ENCODE measurements at regions of chr9 and their contacts with region 1.

Region 1: GRCh38 chr9:128159784-128160602 is at the start of gene BBLN:
- DNase-seq: peak; percentile 91
- H3K4me3 ChIP-seq: peak within 1 kb of the TSS; percentile 78 to 86 (median 80)
- H3K27ac ChIP-seq: peak within 1 kb of the TSS; percentile 35
- H3K4me1 ChIP-seq: peaks cover 11% of the 10 kb centered on the region
- H3K27me3 ChIP-seq: no peaks in the 10 kb centered on the region
- CTCF ChIP-seq: no peak
- POLR2A ChIP-seq: peak; percentile 91
- total RNA-seq, gene BBLN: 51.0 and 53.2 TPM in 2 replicates

Region 2: DNA sequence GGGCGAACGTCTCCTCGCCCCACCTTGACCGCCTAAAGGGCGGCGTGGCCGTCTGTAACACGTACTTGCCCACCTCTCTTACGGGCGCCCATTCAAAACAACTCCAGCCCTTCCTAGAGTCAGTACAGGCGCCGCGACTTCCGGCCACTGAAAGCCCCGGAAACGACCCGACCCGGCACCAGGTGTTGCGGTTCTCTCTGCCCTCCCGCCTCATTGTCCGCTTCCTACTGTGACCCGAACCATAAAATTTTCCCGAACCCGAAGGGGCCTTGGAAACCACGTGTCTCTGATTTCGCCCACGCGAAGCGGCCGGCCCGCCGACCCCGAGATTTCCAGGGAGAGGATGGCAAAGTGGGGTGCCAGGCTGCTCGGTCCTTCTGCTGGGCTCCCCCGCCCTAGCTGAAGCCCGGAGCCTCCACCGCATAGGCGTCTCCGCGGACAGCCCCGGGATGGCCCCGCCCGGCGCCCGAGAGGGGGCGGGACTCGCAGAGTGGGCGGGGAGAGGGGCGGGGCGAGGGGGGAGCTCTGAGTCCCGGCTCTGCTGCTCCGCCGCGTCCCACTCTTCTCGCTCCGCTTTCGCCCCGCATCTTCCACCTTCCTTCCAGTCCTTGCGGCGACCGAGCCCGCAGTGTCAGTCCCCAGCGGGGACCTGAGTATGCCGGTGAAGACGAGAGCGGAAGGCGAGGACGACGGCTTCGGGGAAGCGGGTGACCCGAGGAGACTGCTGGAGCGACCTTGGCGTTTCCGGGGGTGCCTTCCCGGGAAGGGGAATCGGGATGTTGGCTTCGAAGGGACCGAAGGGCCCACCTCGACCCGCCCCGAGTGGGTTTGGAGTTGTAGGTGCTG is 31.8 kb before region 1 on chr9:
- CTCF ChIA-PET with region 1: interaction called, 7 read pairs
- POLR2A ChIA-PET with region 1: interaction called, 4 read pairs
- dilution Hi-C with region 1: no loop called
- intact Hi-C with region 1: loop called (anchors 1 kb)
- DNase-seq: peak; percentile 84
- H3K4me3 ChIP-seq: peak overlapping the region; percentile 83 to 92 (median 90)
- H3K27ac ChIP-seq: peak overlapping the region; percentile 76
- H3K4me1 ChIP-seq: peaks cover 11% of the 10 kb centered on the region
- H3K27me3 ChIP-seq: peaks cover 8 to 9% of the 10 kb centered on the region in 2 experiments
- CTCF ChIP-seq: no peak
- POLR2A ChIP-seq: peak; percentile 32

Region 3: GRCh38 chr9:128191406-128192046 is 31.5 kb after region 1 on chr9 and contains the start of gene CIZ1:
- CTCF ChIA-PET with region 1: interaction called, 4 read pairs
- POLR2A ChIA-PET with region 1: no interaction called
- dilution Hi-C with region 1: no loop called
- intact Hi-C with region 1: loop called (anchors 2 kb)
- DNase-seq: peak; percentile 76
- H3K4me3 ChIP-seq: peak within 1 kb of the TSS; percentile 70 to 89 (median 76)
- H3K27ac ChIP-seq: peak within 1 kb of the TSS; percentile 37
- H3K4me1 ChIP-seq: peaks cover 11% of the 10 kb centered on the region
- H3K27me3 ChIP-seq: no peaks in the 10 kb centered on the region
- CTCF ChIP-seq: peak; percentile 74 to 86
- POLR2A ChIP-seq: peak; percentile 49
- total RNA-seq, gene CIZ1: 143 and 150 TPM in 2 replicates

Region 4: DNA sequence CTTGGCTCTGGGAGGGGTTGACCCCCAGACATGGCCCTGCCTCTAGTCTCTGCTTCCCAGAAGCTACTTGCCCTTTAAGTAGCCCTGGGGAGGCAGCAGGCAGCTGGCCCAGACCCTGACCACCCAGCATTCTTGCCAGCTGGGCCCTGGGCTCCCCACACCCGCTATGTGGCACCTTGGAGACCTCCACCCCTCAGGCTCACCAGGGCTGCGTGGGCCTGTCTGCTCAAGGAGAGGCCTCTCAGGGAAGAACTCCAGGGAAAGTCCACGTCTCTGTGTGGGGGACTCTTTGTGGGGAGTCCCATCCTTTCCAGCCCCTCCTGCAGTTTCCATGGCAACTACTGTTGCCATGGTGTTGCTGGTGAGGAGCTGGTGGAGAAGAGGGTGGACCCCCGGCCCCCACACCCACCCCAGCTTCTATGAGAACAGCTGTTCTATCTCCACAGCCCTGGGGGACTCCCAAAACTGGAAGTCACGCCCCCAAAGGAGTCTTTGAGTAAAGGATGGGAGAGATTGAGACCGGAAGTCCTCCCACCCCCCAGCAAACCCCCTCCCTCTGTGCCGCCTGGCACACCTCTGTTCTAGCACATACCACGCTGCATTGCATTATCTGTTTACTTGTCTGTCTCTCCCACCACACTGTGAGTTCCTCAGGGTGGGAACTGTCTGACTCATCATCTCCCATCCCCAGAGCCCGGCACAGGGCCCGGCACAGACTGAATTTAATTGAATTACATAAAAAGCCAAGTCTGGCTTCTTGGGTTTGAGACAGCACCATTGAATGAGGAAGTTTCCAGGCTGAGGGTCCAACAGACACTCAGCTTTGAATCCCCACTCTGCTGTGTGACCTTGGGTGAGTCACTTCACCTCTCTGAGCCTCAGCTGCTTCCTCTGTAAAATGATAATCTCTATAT is 55.8 kb after region 1 on chr9:
- CTCF ChIA-PET with region 1: no interaction called
- POLR2A ChIA-PET with region 1: no interaction called
- dilution Hi-C with region 1: no loop called
- intact Hi-C with region 1: no loop called
- DNase-seq: peak; percentile 12
- H3K4me3 ChIP-seq: no peak overlapping the region
- H3K27ac ChIP-seq: no peak overlapping the region
- H3K4me1 ChIP-seq: peaks cover 3% of the 10 kb centered on the region
- H3K27me3 ChIP-seq: peaks cover 11% of the 10 kb centered on the region in 2 experiments
- CTCF ChIP-seq: no peak
- POLR2A ChIP-seq: no peak

Region 5: DNA sequence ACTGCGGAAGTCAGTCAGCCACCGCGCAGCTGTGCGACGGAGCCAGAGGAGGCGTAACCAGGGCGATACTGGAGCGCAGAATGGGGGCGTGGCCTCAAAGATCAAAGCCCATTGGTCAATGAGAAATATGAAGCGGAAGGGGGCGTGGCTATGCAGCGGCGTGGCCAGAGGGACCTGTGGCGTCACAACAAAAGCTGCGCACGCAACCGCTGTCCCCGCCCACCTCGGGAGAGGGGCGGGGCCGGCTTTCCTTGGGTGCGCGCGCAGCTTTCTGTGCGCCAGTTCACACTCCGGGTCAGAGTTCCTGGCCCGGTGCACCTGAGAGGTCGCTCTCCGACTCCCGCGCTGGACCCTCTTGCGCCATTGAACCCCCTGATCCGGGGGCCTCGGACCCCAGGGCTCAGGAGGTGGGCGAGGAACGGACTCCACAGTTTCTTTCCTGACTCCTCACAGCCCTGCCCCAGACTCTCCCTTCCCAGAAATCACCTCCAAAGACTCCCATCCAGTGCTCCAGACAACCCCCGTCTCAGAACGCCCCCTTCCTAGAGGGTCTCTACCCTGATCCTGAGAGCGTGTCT is 116.1 kb after region 1 on chr9 and contains the starts of genes GOLGA2 and SWI5:
- CTCF ChIA-PET with region 1: no interaction called
- POLR2A ChIA-PET with region 1: no interaction called
- dilution Hi-C with region 1: no loop called
- intact Hi-C with region 1: loop called (anchors 1 kb)
- DNase-seq: peak; percentile 100
- H3K4me3 ChIP-seq: peak within 1 kb of the TSS; percentile 80 to 95 (median 81)
- H3K27ac ChIP-seq: peak within 1 kb of the TSS; percentile 89
- H3K4me1 ChIP-seq: peaks cover 27% of the 10 kb centered on the region
- H3K27me3 ChIP-seq: no peaks in the 10 kb centered on the region
- CTCF ChIP-seq: no peak
- POLR2A ChIP-seq: peak; percentile 89
- total RNA-seq, gene GOLGA2: 107 and 114 TPM in 2 replicates
- total RNA-seq, gene SWI5: 21.2 and 25.2 TPM in 2 replicates

Region 6: GRCh38 chr9:128370826-128371621 is 211.0 kb after region 1 on chr9 and contains the start of gene URM1:
- CTCF ChIA-PET with region 1: no interaction called
- POLR2A ChIA-PET with region 1: no interaction called
- dilution Hi-C with region 1: no loop called
- intact Hi-C with region 1: no loop called
- DNase-seq: peak; percentile 98
- H3K4me3 ChIP-seq: peak within 1 kb of the TSS; percentile 72 to 95 (median 87)
- H3K27ac ChIP-seq: peak within 1 kb of the TSS; percentile 82
- H3K4me1 ChIP-seq: peaks cover 17% of the 10 kb centered on the region
- H3K27me3 ChIP-seq: no peaks in the 10 kb centered on the region
- CTCF ChIP-seq: peak in 1 of 2 donors; percentile 6
- POLR2A ChIP-seq: peak; percentile 91
- total RNA-seq, gene URM1: 100 and 101 TPM in 2 replicates